ENCODE measurements at regions of chr17 and their contacts with region 1.

Region 1: DNA sequence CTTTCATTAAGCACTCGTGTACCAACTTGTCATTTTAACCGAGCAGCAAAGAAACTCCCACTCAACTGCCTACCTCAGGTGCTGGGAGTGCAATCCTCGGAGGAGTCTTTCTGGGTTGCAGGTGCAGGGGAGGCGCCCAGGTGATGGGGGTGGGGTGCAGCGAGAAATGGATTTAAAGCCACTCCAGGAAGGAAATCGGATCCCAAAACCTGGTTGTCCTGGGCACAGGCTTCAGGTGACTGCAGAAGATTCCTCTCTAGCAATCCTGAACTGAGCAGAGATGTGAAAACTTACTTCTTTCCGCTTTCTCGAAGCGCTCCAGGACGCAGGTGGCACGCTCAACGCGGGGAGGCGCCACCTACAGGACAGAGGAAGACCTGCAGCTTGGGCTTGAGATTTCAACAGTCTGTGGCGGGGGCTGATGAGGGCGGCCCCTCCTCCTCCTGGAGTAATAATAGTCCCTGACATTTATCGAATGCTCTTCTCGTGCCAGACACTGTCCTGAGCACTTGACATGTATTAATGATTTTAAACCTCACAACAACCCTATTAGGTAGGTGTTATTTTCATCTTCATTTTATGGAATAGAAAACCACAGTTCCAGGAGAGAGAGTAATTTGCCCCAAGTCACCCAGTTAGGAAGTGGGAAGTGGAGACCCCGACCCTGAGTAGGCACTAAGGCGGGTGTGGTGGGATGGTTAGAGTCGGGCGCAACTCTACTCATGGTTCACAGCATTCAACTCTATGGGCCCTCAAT is 27.2 kb upstream of the SKAP1 start:
- DNase-seq: peak; percentile 56 to 72
- ATAC-seq: peak; percentile 58 to 92 (median 88)
- H3K4me3 ChIP-seq: no peak overlapping the region
- H3K27ac ChIP-seq: no peak overlapping the region
- H3K4me1 ChIP-seq: peaks cover 4% of the 10 kb centered on the region
- H3K27me3 ChIP-seq: peaks cover 0 to 5% (median 2%) of the 10 kb centered on the region in 3 donors
- CTCF ChIP-seq: peak; percentile 91

Region 2: DNA sequence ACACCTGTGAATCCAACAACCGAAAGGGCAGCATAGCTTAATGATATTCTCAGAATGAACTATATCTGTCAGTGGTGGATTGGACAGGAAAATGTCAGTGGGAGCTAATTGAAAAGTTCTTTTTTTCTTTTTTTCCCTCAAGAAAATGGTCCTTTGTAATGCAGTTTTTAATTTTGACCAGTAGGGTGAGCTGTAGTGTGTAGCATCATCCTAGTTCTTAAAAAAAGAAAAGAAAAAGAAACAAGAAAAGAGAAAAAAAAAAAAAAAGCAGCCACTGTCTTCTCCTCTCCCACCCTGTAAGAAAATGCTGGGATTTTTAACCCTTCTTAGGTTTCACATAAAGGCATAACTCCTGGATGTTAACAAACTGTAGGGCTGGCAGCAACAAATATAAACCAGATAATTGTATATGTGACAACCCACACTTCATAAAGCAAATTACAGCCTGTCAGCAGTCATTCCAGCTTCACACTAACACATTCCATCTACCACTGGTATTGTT is 105.4 kb before region 1 on chr17:
- intact Hi-C with region 1: loop called in 1 of 2 experiments (anchors 10 kb)
- DNase-seq: no peak
- ATAC-seq: no peak
- H3K4me3 ChIP-seq: no peak overlapping the region
- H3K27ac ChIP-seq: no peak overlapping the region
- H3K4me1 ChIP-seq: no peaks in the 10 kb centered on the region
- H3K27me3 ChIP-seq: peaks cover 0 to 10% (median 2%) of the 10 kb centered on the region in 3 donors
- CTCF ChIP-seq: peak; percentile 56

Region 3: GRCh38 chr17:48492401-48493298 is 35.4 kb after region 1 on chr17:
- intact Hi-C with region 1: no loop called
- DNase-seq: peak; percentile 76 to 90
- ATAC-seq: peak; percentile 95 to 100 (median 98)
- H3K4me3 ChIP-seq: peak overlapping the region; percentile 40
- H3K27ac ChIP-seq: no peak overlapping the region
- H3K4me1 ChIP-seq: peaks cover 6% of the 10 kb centered on the region
- H3K27me3 ChIP-seq: peaks cover 0 to 12% (median 2%) of the 10 kb centered on the region in 3 donors
- CTCF ChIP-seq: peak; percentile 89